HCT116 (cell line): ENCODE measurements at regions of chr19 and their contacts with region 1.

Region 1: DNA sequence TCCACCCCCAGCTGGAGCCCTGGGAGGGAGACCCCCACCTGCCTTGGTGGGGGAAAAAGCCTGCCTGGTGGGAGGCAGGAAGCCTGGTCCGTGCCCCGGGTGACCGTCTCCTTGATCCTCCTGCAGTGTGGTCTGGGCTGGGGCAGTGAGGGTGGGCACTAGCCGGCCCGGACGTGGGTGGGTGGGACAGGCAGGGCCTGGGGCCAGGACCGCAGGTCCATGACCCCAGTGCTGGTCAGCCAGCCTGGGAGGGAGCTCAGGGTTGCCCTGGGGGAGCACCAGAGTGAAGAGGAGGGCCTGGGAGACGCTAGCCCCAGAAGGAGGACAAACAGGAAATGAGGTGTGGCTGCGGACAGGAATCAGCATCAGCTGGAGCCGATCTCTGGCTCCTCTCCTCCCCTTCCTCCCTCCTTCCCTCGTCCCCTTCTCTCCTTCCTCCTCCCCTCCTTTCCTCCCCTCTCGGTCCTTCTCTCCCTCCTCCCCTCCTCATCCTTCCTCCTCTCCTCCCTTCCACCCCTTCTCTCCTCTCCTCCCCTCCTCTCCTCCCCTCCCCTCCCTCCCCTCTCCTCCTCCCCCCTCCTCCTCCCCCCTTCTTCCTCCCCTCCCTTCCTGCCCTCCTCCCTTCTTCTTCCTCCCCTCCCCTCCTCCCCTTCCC is 5.3 kb upstream of the MKNK2 start:
- DNase-seq: peak; percentile 53
- ATAC-seq: peak; percentile 9; the same call in 1 of the 2 replicates
- H3K4me3 ChIP-seq: peak overlapping the region; percentile 48 to 56
- H3K27ac ChIP-seq: peak overlapping the region; percentile 99
- H3K4me1 ChIP-seq: peaks cover 78 to 96% of the 10 kb centered on the region in 2 experiments
- H3K27me3 ChIP-seq: no peaks in the 10 kb centered on the region
- CTCF ChIP-seq: no peak
- POLR2A ChIP-seq: peak; percentile 23
- RAD21 ChIP-seq: no peak

Region 2: GRCh38 chr19:1825909-1826556 is 230.3 kb before region 1 on chr19:
- CTCF ChIA-PET with region 1: no interaction called
- POLR2A ChIA-PET with region 1: interaction called, 15 read pairs
- RAD21 ChIA-PET with region 1: no interaction called
- intact Hi-C with region 1: no loop called
- DNase-seq: no peak
- ATAC-seq: peak; percentile 89
- H3K4me3 ChIP-seq: no peak overlapping the region
- H3K27ac ChIP-seq: no peak overlapping the region; the same call in 1 of the 2 replicates
- H3K4me1 ChIP-seq: peaks cover 4 to 7% of the 10 kb centered on the region in 2 experiments; a peak in 3 of 4 replicates
- H3K27me3 ChIP-seq: no peaks in the 10 kb centered on the region
- CTCF ChIP-seq: peak; percentile 66 to 96 (median 92); a peak in 5 of 6 replicates
- POLR2A ChIP-seq: no peak
- RAD21 ChIP-seq: peak; percentile 79